ENCODE measurements at regions of chr2 and their contacts with region 1.

Region 1: DNA sequence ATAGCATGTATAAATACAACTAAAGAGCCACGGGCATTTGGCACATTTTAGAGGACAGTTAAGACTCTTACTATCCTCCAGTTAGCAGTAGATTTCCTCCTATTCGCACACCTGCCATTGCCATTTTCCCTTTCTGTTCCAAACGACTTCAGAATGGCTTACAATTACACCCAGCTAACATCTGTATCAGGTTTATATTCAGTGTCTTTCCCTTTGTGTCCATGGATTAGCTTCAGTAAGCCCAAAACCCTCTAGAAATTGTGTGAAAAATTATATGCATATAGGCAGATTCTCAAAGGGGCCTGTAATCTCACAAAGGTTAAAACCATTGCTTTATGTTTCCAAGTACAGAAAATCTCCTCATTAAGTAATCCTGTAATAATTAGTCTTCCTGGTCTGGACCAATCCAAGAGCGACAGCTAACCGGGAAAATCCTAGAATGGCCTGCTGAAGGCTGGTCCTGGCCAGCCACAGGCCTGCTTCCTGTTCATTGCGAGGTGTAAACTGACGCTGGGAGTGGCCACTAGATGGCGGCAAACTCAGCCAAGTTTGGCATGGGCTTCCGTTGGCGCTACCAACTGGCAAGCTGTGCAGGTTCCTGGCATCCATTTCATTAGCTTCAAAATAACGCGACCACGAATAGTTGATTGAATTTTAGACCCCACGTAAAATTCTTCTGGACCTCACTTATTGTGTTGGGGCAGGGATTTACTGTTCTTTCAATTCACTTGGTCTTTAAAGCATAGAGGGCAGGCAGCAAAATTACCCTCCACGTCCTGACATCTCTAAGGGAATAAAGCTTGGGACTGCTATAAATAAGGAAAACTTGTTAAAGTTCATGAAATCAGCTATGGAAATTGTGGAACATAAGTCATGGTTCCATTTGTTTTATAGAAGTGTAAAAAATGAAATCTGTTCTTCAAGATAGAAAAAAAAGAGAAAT is 17.1 kb downstream of the ARHGAP25 start:
- DNase-seq: peak; percentile 68
- H3K4me3 ChIP-seq: no peak overlapping the region
- H3K27ac ChIP-seq: no peak overlapping the region
- H3K27me3 ChIP-seq: no peaks in the 10 kb centered on the region
- CTCF ChIP-seq: peak; percentile 95

Region 2: DNA sequence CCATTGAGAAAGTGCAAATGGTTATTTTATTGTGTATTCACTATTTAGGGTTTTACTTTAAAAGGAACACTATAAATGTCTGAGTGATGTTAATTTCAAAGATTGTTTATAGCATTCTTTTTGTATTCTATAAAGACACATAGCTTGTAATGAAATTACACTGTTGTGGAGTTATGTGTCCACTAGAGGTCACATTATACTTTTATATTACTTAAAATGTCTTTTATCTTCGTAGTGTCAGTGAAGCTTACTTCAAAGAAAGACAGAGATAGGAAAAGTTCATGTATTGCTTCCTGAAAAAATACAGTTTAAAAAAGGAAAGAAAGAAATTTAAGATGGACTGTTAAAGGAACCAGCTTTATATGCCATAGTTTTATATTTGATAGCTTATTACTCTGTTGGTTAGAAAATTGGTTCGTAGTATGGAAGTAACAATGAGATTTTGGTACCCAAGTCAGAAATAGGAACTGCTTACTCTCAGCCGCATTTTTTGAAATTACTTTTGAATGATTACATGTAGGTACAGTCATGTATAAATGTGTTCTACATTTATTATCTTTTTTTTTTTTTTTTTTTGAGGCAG is 263.8 kb before region 1 on chr2:
- CTCF ChIA-PET with region 1: interaction called, 14 read pairs
- POLR2A ChIA-PET with region 1: no interaction called
- DNase-seq: no peak
- H3K4me3 ChIP-seq: no peak overlapping the region
- H3K27ac ChIP-seq: no peak overlapping the region
- H3K27me3 ChIP-seq: no peaks in the 10 kb centered on the region
- CTCF ChIP-seq: peak; percentile 49

Region 3: DNA sequence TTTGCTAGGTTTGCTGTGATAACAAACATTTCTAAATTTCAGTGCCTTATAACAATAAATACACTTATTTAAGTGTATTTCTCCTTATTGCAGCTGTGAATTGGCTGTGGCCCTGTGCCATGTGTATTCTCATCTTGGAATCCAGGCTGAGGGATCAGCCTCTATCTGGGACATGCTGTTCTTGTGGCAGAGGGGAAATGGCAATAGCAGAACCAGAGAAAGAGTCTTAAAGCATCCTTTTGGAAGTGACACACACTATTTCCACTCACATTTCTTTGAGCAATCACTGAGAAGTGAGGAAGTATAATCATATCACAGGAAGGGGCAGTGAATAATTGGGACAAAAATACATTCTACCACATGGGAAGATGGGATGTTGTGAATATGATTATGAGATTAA is 174.5 kb before region 1 on chr2:
- CTCF ChIA-PET with region 1: no interaction called
- POLR2A ChIA-PET with region 1: no interaction called
- DNase-seq: no peak
- H3K4me3 ChIP-seq: no peak overlapping the region
- H3K27ac ChIP-seq: no peak overlapping the region
- H3K27me3 ChIP-seq: no peaks in the 10 kb centered on the region
- CTCF ChIP-seq: no peak

Region 4: DNA sequence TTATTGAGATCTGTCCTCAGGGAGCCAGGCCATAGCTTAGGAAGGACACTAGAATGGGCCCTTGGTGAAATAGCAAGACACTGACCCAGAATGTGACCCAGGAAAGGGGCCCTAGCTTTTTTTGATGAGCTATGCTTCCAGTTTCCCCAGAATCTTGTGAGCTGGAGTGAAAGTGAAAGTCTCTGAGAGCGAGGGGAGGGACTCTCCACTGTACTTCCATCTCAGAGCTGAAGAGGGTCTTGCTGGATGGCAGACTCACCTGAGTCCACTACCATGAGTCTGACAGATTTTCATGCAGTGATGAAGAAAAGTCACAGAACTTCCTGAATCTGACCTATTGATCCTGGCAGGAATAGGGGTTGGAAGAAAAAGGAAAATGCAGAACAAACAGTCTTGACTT is 14.0 kb before region 1 on chr2:
- CTCF ChIA-PET with region 1: interaction called, 55 read pairs
- POLR2A ChIA-PET with region 1: no interaction called
- DNase-seq: no peak
- H3K4me3 ChIP-seq: no peak overlapping the region
- H3K27ac ChIP-seq: no peak overlapping the region
- H3K27me3 ChIP-seq: no peaks in the 10 kb centered on the region
- CTCF ChIP-seq: no peak

Region 5: GRCh38 chr2:68837164-68837860 is 85.6 kb after region 1 on chr2:
- CTCF ChIA-PET with region 1: interaction called, 39 read pairs
- POLR2A ChIA-PET with region 1: no interaction called
- DNase-seq: no peak
- H3K4me3 ChIP-seq: no peak overlapping the region
- H3K27ac ChIP-seq: no peak overlapping the region
- H3K27me3 ChIP-seq: no peaks in the 10 kb centered on the region
- CTCF ChIP-seq: peak; percentile 65

Region 6: DNA sequence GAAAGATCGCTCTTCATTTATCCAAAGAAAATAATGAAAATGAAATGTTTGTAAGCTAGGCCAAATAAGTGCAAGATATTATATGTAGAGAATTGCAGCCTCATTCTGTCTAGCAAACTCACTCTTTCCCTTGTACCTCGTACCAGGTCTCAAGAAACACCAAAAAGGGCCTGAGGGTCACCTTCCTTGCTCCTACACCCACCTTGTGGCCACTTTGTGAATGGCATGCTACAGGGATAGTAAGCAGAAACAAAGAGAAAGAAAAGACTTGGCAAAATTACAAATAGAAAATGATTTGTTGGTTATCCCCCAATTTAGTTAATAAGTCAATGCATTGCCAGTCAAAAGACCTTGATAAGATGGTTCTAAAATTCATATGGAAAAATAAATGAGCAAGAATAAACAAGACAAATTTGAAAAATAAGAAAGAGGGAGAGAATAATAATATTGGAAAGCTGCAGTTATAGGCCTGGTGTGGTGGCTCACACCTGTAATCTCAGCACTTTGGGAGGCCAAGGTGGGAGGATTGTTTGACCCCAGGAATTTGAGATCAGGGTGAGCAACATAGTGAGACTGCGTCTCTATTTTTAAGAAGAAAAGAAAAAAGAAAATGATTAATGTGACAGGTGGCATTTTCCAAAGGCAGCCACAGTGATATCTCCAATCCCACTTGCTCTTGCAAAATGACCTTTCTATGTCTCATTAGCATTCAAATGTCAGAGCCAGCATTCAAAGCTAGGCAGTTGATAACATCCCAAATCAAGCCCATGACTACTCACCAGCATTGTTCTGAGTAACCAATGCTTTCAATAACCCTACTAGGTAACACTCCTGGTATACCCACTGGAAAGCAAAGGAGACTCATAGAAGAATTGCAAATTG is 158.4 kb after region 1 on chr2:
- CTCF ChIA-PET with region 1: interaction called, 36 read pairs
- POLR2A ChIA-PET with region 1: no interaction called
- DNase-seq: peak; percentile 46
- H3K4me3 ChIP-seq: no peak overlapping the region
- H3K27ac ChIP-seq: no peak overlapping the region
- H3K27me3 ChIP-seq: no peaks in the 10 kb centered on the region
- CTCF ChIP-seq: peak; percentile 95

Region 7: GRCh38 chr2:68925295-68925896 is 173.7 kb after region 1 on chr2:
- CTCF ChIA-PET with region 1: interaction called, 129 read pairs
- POLR2A ChIA-PET with region 1: no interaction called
- DNase-seq: no peak
- H3K4me3 ChIP-seq: no peak overlapping the region
- H3K27ac ChIP-seq: no peak overlapping the region
- H3K27me3 ChIP-seq: peaks cover 5% of the 10 kb centered on the region
- CTCF ChIP-seq: peak; percentile 99